ENCODE measurements at regions of chr18 and their contacts with region 1.

Region 1: GRCh38 chr18:55343396-55344073 is 244.5 kb downstream of the TCF4 start:
- DNase-seq: no peak
- H3K4me3 ChIP-seq: no peak overlapping the region
- H3K27ac ChIP-seq: no peak overlapping the region
- H3K4me1 ChIP-seq: peaks cover 0 to 7% of the 10 kb centered on the region in 2 donors
- H3K27me3 ChIP-seq: no peaks in the 10 kb centered on the region
- CTCF ChIP-seq: peak; percentile 32 to 69 (median 67)

Region 2: DNA sequence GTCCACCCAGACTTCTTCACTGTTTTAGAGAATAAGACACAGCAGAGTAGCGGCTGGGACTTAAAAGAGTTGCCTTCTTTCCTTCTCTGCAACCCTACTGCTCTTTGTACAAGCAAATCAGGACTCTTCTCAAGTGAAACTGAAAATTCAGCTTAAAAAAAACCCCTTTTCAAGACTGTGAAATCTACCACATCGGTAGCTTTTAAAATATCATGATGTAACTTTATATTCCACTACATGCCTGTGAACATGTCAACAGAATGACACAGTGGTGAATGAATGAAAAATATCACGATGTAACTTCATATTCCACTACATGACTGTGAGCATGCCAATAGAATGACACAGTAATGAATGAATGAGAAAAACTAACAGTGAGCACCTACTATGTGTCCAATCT is 191.0 kb after region 1 on chr18:
- intact Hi-C with region 1: no loop called
- DNase-seq: no peak
- H3K4me3 ChIP-seq: no peak overlapping the region
- H3K27ac ChIP-seq: no peak overlapping the region
- H3K4me1 ChIP-seq: no peaks in the 10 kb centered on the region
- H3K27me3 ChIP-seq: no peaks in the 10 kb centered on the region
- CTCF ChIP-seq: no peak

Region 3: GRCh38 chr18:55861266-55861665 is 517.7 kb after region 1 on chr18:
- intact Hi-C with region 1: loop called (anchors 10 kb)
- DNase-seq: no peak
- H3K4me3 ChIP-seq: no peak overlapping the region
- H3K27ac ChIP-seq: no peak overlapping the region
- H3K4me1 ChIP-seq: no peaks in the 10 kb centered on the region
- H3K27me3 ChIP-seq: no peaks in the 10 kb centered on the region
- CTCF ChIP-seq: peak in 2 of 3 experiments; percentile 6 to 43

Region 4: DNA sequence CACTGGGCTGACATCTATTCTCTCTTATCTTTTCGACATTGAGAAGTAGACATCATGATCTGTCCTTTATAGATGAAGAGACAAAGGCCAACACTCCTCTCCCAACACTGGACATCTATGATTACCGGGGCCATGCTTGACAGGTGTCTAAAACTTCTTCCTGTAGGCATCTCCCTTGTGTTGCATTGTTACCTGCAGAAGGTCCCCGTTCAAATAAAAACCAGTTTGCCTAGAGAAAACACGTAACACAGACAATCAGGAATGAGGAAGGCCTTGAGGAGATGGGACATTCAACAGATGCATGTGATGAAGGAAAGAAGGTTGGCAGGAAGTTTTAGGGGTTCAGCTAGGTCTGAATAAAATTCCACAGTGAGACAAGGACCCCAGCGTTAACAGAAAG is 1938.0 kb after region 1 on chr18:
- intact Hi-C with region 1: no loop called
- DNase-seq: no peak
- H3K4me3 ChIP-seq: no peak overlapping the region
- H3K27ac ChIP-seq: no peak overlapping the region
- H3K4me1 ChIP-seq: no peaks in the 10 kb centered on the region
- H3K27me3 ChIP-seq: no peaks in the 10 kb centered on the region
- CTCF ChIP-seq: no peak

Measured in ascending aorta (tissue), 2 donors.